PC-3 (cell line): ENCODE measurements at regions of chr17 and their contacts with region 1.

Region 1: DNA sequence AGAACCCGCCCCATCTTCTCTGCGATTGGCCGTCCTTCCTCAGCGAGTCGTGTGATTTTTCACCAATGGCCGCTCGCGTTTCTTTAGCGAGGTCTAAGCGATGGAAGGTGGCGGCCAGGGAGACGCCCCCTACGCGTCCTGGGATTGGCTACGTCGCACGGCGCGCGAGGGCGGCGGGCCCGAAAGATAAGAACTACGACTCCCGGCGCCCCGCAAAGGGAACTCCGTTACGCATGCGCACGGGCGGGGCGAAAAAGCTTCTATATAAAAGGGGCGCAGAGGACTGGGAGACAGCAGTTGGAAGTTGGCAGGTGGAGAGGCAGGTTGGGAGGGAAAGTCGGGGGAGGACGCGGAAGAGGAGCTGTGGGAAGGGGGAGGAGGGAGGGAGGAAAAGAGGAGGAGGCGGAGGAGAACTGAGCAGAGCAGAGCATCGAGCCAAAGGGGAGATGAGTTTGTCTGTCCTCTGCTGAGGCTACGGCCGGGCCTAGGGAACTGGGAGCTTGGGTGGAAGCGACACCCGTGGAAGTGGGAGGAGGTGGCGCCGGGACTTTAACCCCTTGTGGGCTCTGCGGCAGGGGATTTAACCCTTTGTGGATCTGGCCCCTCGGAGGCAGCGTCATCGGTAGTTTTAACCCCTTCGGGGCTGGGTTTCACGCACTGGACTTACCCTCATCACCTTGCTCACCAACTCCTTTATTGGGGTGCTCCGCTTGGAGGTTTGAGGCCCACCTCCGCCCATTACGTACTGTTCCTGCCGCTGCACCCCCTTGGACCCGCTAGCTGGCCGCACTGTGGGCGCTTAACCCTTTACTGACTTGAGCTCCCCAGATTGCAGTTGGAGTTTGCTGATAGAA is at the start of gene HEXIM1:
- DNase-seq: peak; percentile 100
- ATAC-seq: peak; percentile 72
- H3K4me3 ChIP-seq: peak within 1 kb of the TSS; percentile 91
- H3K27ac ChIP-seq: peak within 1 kb of the TSS; percentile 90
- H3K4me1 ChIP-seq: peaks cover 27% of the 10 kb centered on the region
- H3K27me3 ChIP-seq: no peaks in the 10 kb centered on the region
- CTCF ChIP-seq: no peak
- total RNA-seq, gene HEXIM1: 47.3 and 59.0 TPM in 2 replicates

Region 2: GRCh38 chr17:44968226-44969143 is 179.9 kb before region 1 on chr17 and contains the start of gene C1QL1:
- CTCF ChIA-PET with region 1: interaction called, 19 read pairs
- POLR2A ChIA-PET with region 1: no interaction called
- intact Hi-C with region 1: no loop called
- DNase-seq: peak; percentile 96
- ATAC-seq: peak; percentile 98
- H3K4me3 ChIP-seq: peak within 1 kb of the TSS; percentile 74
- H3K27ac ChIP-seq: no peak within 1 kb of the TSS
- H3K4me1 ChIP-seq: peaks cover 18% of the 10 kb centered on the region; the same call in 1 of the 2 replicates
- H3K27me3 ChIP-seq: peaks cover 14% of the 10 kb centered on the region
- CTCF ChIP-seq: no peak
- total RNA-seq, gene C1QL1: 2.8 and 4.1 TPM in 2 replicates

Region 3: GRCh38 chr17:45073414-45074070 is 74.9 kb before region 1 on chr17:
- CTCF ChIA-PET with region 1: no interaction called
- POLR2A ChIA-PET with region 1: no interaction called
- intact Hi-C with region 1: no loop called
- DNase-seq: no peak
- ATAC-seq: no peak; the same call in 1 of the 2 replicates
- H3K4me3 ChIP-seq: no peak overlapping the region
- H3K27ac ChIP-seq: no peak overlapping the region
- H3K4me1 ChIP-seq: peaks cover 10% of the 10 kb centered on the region
- H3K27me3 ChIP-seq: no peaks in the 10 kb centered on the region
- CTCF ChIP-seq: no peak

Region 4: GRCh38 chr17:45096141-45096540 is 52.3 kb before region 1 on chr17:
- CTCF ChIA-PET with region 1: interaction called, 13 read pairs
- POLR2A ChIA-PET with region 1: no interaction called
- intact Hi-C with region 1: no loop called
- DNase-seq: peak; percentile 61
- ATAC-seq: no peak
- H3K4me3 ChIP-seq: no peak overlapping the region
- H3K27ac ChIP-seq: no peak overlapping the region
- H3K4me1 ChIP-seq: peaks cover 21% of the 10 kb centered on the region
- H3K27me3 ChIP-seq: no peaks in the 10 kb centered on the region
- CTCF ChIP-seq: peak; percentile 87

Region 5: DNA sequence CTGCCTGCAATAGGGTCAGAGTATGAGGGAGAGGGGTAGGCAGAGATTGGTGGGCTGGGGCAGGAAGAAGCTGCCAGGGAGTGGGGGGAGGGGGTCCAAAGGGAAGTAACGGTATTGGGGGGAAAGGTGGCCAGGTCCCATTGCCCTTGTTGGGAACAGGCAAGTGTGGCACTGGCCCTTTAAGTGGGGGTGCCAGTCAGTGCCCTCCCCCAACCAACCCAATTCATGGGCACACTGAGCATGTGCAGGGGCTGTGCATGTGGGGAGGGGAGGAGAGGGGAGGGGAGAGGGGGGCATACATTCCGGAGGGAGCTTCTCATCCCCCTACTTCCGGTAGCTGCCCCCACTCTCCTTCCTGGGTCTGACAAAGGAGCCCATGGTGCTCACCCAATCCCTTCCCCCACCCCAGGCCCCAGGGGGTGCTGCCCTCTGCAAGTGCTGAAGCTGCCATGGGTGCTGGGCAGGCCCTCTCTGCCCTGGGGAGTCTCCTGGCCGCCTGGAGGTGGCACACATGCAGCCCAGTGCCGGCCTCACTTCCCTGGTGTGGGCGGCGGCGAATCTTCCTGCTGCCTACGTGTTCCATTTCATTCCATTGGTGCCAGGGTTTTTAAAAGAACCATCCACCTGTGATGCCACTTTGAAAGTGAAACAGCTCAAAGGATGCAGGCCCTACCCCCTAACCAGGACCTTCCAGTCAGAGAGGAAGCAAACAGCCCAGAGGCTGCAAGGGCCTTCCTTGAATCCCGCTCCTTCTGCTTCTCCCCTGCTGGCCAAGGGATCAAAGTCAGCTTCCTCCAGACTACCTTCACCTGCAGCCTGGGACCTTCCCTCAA is 24.3 kb after region 1 on chr17:
- CTCF ChIA-PET with region 1: interaction called, 57 read pairs
- POLR2A ChIA-PET with region 1: interaction called, 48 read pairs
- intact Hi-C with region 1: loop called (anchors 1 kb)
- DNase-seq: peak; percentile 97
- ATAC-seq: peak; percentile 63
- H3K4me3 ChIP-seq: peak overlapping the region; percentile 46; the same call in 1 of the 2 replicates
- H3K27ac ChIP-seq: peak overlapping the region; percentile 95
- H3K4me1 ChIP-seq: peaks cover 59% of the 10 kb centered on the region
- H3K27me3 ChIP-seq: no peaks in the 10 kb centered on the region
- CTCF ChIP-seq: peak; percentile 34; the same call in 1 of the 2 replicates

Region 6: GRCh38 chr17:45277216-45277849 is 128.9 kb after region 1 on chr17:
- CTCF ChIA-PET with region 1: no interaction called
- POLR2A ChIA-PET with region 1: interaction called, 20 read pairs
- intact Hi-C with region 1: no loop called
- DNase-seq: peak; percentile 97
- ATAC-seq: peak; percentile 87
- H3K4me3 ChIP-seq: no peak overlapping the region
- H3K27ac ChIP-seq: no peak overlapping the region
- H3K4me1 ChIP-seq: peaks cover 9% of the 10 kb centered on the region
- H3K27me3 ChIP-seq: no peaks in the 10 kb centered on the region
- CTCF ChIP-seq: peak; percentile 90

Region 7: GRCh38 chr17:45410144-45411091 is 262.0 kb after region 1 on chr17:
- CTCF ChIA-PET with region 1: no interaction called
- POLR2A ChIA-PET with region 1: no interaction called
- intact Hi-C with region 1: no loop called
- DNase-seq: no peak
- ATAC-seq: no peak
- H3K4me3 ChIP-seq: no peak overlapping the region
- H3K27ac ChIP-seq: no peak overlapping the region
- H3K4me1 ChIP-seq: no peaks in the 10 kb centered on the region
- H3K27me3 ChIP-seq: no peaks in the 10 kb centered on the region
- CTCF ChIP-seq: no peak